Panc1 (cell line): ENCODE measurements at regions of chr20 and their contacts with region 1.

Region 1: DNA sequence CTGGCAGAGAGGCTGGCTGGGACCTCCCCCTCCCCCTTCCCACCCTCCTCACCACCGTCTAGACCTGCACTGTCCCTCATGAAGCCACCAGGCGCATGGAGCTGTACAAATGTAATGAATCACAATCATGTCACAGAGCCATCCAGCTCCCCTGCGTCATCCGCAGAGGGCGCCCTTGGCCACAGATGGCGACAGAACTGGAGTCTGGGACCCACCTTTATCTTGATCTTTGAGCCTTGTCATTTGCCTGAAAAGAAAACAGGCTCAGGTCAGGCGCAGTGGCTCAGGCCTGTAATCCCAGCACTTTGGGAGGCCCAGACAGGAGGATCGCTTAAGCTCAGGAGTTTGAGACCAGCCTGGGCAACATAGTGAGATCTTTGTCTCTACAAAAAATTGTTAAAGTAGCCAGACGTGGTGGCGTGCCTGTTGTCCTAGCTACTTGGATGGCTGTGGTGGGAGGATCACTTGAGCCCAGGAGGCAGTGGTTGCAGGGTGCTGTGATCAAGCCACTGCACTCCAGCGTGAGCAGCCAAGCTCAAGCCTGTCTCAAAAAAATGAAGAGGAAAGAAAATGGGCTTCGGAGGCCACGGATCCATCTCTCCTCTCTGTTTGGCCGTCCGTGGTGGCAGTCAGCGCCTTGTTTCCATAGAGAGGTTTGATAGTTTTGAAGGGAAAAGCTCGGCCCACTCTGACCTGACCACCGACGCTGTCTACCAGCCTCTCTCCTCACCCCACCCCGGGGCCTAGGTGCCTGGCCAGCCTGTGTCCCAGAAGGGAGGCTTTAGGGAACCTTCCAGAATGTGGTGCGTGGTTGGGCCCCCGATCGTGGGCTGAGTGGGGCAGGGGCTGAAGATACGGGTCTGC is 6.2 kb downstream of the COL9A3 start:
- DNase-seq: peak; percentile 55
- ATAC-seq: peak; percentile 66
- H3K4me3 ChIP-seq: no peak overlapping the region
- H3K27ac ChIP-seq: no peak overlapping the region
- H3K4me1 ChIP-seq: peaks cover 57% of the 10 kb centered on the region
- H3K27me3 ChIP-seq: no peaks in the 10 kb centered on the region
- CTCF ChIP-seq: peak; percentile 87

Region 2: DNA sequence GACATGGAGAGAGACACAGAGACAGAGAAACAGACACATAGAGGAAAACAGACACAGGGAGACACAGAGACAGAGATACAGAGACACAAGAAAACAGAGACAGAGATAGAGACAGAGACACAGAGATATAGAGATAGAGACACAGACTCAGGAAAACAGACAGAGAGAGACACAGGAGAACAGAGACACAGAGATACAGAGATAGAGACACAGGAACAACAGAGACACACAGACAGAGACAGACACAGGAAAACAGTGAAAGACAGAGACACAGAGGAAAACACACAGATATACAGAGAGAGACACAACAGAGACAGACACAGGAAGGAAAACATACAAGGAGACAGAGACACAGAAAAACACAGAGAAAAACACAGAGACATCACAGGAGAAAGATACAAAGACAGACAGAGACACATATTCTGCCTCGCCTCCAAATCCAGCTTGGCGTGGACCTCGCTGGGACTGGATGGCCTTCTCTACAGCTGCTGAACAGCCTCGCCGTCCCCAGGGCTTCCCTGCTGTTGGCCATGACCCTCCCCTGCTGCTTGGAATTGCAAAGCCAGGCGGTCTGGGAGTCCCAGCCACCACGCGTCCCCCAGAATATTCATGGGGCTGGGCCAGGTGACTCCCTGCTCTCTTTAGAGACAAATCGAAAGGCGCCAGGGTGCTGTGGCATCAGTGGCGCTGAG is 77.6 kb before region 1 on chr20:
- CTCF ChIA-PET with region 1: interaction called, 16 read pairs
- POLR2A ChIA-PET with region 1: no interaction called
- in situ Hi-C with region 1: no loop called
- intact Hi-C with region 1: no loop called
- DNase-seq: no peak
- ATAC-seq: no peak
- H3K4me3 ChIP-seq: no peak overlapping the region
- H3K27ac ChIP-seq: no peak overlapping the region
- H3K4me1 ChIP-seq: peaks cover 14% of the 10 kb centered on the region
- H3K27me3 ChIP-seq: no peaks in the 10 kb centered on the region
- CTCF ChIP-seq: no peak

Region 3: GRCh38 chr20:62846188-62846890 is 23.3 kb after region 1 on chr20:
- CTCF ChIA-PET with region 1: interaction called, 14 read pairs
- POLR2A ChIA-PET with region 1: no interaction called
- in situ Hi-C with region 1: no loop called
- intact Hi-C with region 1: no loop called
- DNase-seq: no peak
- ATAC-seq: no peak
- H3K4me3 ChIP-seq: no peak overlapping the region
- H3K27ac ChIP-seq: no peak overlapping the region
- H3K4me1 ChIP-seq: no peaks in the 10 kb centered on the region
- H3K27me3 ChIP-seq: no peaks in the 10 kb centered on the region
- CTCF ChIP-seq: no peak